Activated naive CD4-positive, alpha-beta T cell treated with anti-CD3 and anti-CD28 coated beads for 36 hours (primary cell): ENCODE measurements at regions of chr19 and their contacts with region 1.

Region 1: GRCh38 chr19:55088543-55089341 is 13.1 kb downstream of the EPS8L1 start:
- DNase-seq: peak; percentile 86
- H3K4me3 Mint-ChIP-seq: no peak overlapping the region
- H3K27ac Mint-ChIP-seq: no peak overlapping the region
- H3K4me1 Mint-ChIP-seq: peaks cover 17% of the 10 kb centered on the region
- H3K27me3 Mint-ChIP-seq: peaks cover 43% of the 10 kb centered on the region

Region 2: DNA sequence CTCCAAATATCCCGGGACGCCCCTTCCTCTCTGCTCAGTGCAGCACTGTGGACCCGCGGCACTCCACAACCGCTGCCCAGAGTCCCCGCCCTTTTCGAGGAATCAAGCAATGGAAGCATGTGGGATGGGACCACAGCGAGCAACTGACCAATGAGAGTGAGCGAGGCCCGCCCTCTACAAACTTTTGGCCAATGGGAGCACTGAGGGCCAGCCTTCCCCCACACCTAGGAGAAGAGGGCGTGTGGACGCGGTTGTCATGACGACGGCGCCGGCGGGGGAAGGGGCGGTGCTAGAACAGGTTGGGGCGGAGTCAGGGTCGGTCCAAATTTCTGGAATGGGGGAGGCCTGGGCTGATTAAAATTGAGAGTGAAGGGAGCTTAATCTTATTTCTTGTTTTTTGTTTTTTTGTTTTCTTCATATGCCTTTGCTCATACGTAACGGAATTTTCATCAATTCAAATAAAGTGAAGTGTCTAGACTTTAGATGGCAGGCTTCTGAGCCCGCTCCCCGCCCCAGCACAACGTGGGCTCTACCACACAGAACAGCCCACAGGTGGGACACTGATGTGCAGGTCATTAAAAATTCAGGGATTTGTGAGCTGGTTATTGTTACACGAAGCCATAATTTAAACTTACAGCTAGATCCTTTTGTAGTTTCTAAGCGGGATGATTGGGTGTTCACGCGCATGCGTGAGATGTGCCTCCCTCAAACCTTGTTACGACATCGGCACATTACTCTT is 78.0 kb after region 1 on chr19 and contains the start of gene DNAAF3:
- CTCF ChIA-PET with region 1: interaction called, 3 read pairs
- intact Hi-C with region 1: loop called (anchors 10 kb)
- DNase-seq: peak; percentile 83
- H3K4me3 Mint-ChIP-seq: peak within 1 kb of the TSS; percentile 64
- H3K27ac Mint-ChIP-seq: no peak within 1 kb of the TSS
- H3K4me1 Mint-ChIP-seq: peaks cover 11% of the 10 kb centered on the region
- H3K27me3 Mint-ChIP-seq: peaks cover 59% of the 10 kb centered on the region
- total RNA-seq, gene DNAAF3: not detected